ENCODE measurements at regions of chr13 and their contacts with region 1.

Region 1: GRCh38 chr13:100088644-100089464 is at the start of gene PCCA:
- DNase-seq: peak; percentile 90
- H3K4me3 Mint-ChIP-seq: peak within 1 kb of the TSS; percentile 95
- H3K27ac Mint-ChIP-seq: peak within 1 kb of the TSS; percentile 36
- H3K4me1 Mint-ChIP-seq: peaks cover 20% of the 10 kb centered on the region
- H3K27me3 Mint-ChIP-seq: no peaks in the 10 kb centered on the region
- total RNA-seq, gene PCCA: 7.9 to 8.2 TPM

Region 2: DNA sequence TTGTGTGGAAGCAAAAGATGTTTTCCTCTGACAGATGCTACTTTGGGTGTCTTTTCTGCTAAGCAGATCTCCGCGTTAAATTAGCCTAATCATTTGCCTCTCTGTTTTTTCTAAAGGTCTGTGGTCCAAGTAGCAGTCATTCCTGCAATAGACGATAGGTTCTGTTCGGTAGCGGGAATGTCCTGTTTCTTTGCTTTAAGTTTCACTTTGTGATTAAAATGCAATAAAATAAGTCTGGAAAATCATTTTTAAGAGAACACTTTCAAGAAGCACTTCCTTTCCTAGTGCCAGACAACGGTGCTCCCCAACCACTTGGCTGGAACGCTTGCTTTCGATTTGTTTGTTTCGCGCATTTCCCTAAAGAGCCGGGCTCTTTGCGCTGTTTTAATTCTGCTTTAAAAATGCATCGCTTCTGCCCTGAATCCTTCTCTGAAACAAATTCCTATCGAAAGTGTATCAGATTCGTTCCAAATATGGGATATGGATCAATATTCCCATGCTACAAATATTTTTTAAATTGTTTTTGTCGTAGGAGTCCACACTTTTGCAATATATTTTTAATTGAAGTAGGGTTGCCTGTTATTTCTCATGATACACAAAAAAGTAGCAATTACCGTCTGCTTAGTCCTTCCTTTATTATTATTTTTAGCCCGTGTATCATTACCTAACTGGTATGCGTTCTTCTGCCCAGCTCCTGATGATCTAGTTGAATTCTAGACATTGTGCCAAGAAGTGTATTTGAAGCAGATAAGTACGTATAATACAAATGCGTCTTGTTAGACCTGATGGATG is 93.1 kb before region 1 on chr13:
- CTCF ChIA-PET with region 1: no interaction called
- POLR2A ChIA-PET with region 1: no interaction called
- intact Hi-C with region 1: loop called (anchors 2 kb)
- DNase-seq: no peak
- H3K4me3 Mint-ChIP-seq: no peak overlapping the region
- H3K27ac Mint-ChIP-seq: peak overlapping the region; percentile 36
- H3K4me1 Mint-ChIP-seq: peaks cover under 1% of the 10 kb centered on the region
- H3K27me3 Mint-ChIP-seq: peaks cover 73% of the 10 kb centered on the region

Region 3: DNA sequence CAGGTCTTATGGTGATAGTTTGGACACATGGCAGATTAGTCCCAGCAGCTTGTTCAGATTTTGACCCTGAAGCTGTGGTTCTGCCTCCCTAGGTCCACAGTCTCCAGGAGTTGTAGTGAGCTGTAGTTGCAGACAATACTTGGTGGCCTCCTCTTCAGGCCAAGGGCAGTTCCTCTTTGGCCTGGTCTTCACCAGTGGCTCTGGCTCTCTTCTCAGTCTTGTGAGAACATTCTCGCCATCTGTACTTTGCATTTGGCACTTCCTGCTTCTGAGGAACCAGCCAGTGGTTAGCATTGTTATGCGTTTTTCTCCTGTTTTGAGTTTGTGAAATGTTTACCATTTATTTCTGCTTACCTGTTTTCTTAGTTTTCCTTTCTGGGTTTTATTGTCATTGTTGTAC is 40.8 kb after region 1 on chr13:
- CTCF ChIA-PET with region 1: no interaction called
- POLR2A ChIA-PET with region 1: no interaction called
- intact Hi-C with region 1: loop called (anchors 1 kb)
- DNase-seq: no peak
- H3K4me3 Mint-ChIP-seq: no peak overlapping the region
- H3K27ac Mint-ChIP-seq: no peak overlapping the region
- H3K4me1 Mint-ChIP-seq: peaks cover 22% of the 10 kb centered on the region
- H3K27me3 Mint-ChIP-seq: no peaks in the 10 kb centered on the region

Region 4: DNA sequence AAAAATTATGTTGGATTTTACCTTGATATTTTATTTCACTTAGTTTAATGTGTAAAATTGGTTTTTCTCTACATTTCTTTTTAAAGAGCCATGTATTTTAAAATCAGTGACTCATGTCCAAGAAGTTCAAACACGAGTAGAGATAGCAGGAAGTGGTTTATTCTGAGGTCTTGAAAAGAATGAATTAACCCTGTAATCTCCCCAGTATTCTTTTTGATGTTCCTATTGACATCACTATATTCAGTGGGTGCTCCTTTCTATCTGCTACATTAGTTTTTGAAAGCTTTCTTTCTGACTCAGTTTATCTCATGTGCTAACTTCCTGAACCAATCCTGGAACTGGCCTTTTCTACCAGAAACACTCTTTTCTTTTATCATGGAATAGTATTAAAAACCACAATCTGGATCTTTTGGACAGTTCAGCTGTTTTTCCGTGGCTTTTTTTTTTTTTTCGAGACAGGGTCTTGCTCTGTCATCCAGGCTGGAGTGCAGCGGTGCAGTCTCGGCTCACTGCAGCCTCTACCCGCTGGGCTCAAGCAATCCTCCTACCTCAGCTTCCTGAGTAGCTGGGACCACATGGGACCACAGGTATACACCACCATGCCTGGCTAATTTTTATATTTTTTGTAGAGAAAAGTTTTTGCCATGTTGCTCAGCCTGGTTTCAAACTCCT is 115.0 kb after region 1 on chr13:
- CTCF ChIA-PET with region 1: no interaction called
- POLR2A ChIA-PET with region 1: no interaction called
- intact Hi-C with region 1: loop called (anchors 1 kb)
- DNase-seq: peak; percentile 14
- H3K4me3 Mint-ChIP-seq: no peak overlapping the region
- H3K27ac Mint-ChIP-seq: peak overlapping the region; percentile 45
- H3K4me1 Mint-ChIP-seq: peaks cover 15% of the 10 kb centered on the region
- H3K27me3 Mint-ChIP-seq: no peaks in the 10 kb centered on the region

Measured in activated CD4-positive, alpha-beta memory T cell treated with anti-CD3 and anti-CD28 coated beads for 36 hours (primary cell).